GM12878 (cell line): ENCODE measurements at regions of chr3 and their contacts with region 1.

Region 1: GRCh38 chr3:46960081-46960701 is 16.4 kb downstream of the CCDC12 start:
- DNase-seq: no peak
- ATAC-seq: peak; percentile 65
- H3K4me3 ChIP-seq: no peak overlapping the region
- H3K27ac ChIP-seq: peak overlapping the region; percentile 38
- H3K4me1 ChIP-seq: peaks cover 55% of the 10 kb centered on the region
- H3K27me3 ChIP-seq: no peaks in the 10 kb centered on the region
- CTCF ChIP-seq: no peak
- EP300 ChIP-seq: no peak
- POLR2A ChIP-seq: no peak
- RAD21 ChIP-seq: no peak

Region 2: DNA sequence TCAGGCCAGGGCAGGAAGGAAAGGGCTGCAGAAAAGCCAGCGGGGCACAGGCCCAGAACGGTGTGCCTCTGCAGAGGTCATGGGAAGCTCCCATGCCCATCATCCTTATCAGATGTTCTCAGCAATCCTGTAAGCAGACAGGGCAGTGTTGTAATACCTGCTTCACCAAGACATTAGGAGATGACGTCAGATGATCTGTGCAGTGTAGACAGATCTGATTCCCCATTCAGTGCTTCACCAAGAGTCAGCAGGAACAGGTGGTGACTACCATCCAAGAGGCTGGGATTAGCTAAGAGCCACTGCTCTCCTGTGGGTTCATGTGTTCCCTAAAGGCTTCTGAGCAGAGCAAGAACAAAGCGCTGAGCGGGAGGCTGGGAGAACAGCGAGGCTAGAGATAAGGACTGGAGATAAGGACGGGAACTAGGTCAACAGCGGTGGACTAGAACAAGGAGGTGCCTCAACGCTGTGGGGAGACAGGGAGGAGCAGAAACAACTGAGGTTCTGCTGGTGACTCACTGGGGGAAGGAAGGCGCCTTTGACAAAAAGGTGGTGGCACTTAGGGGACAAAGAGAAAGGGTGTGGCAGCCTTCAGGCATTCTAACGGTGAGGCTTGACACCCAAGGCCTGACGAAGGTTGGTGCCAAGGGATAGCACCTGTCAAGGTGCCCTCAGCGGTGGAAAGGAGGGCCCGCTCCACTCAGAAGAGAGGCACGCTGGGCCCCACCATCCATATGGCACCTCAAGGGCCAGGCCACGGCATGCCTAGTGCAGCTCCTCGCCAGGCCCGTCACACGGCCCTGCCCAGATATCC is 12.0 kb before region 1 on chr3:
- CTCF ChIA-PET with region 1: interaction called, 6 read pairs
- POLR2A ChIA-PET with region 1: interaction called, 21 read pairs
- RAD21 ChIA-PET with region 1: interaction called, 11 read pairs
- SMC1A ChIA-PET with region 1: interaction called, 16 read pairs
- in situ Hi-C with region 1: no loop called
- intact Hi-C with region 1: no loop called
- DNase-seq: no peak
- ATAC-seq: no peak
- H3K4me3 ChIP-seq: no peak overlapping the region
- H3K27ac ChIP-seq: peak overlapping the region; percentile 73
- H3K4me1 ChIP-seq: peaks cover 45% of the 10 kb centered on the region
- H3K27me3 ChIP-seq: no peaks in the 10 kb centered on the region
- CTCF ChIP-seq: no peak
- EP300 ChIP-seq: no peak
- POLR2A ChIP-seq: no peak
- RAD21 ChIP-seq: no peak

Region 3: DNA sequence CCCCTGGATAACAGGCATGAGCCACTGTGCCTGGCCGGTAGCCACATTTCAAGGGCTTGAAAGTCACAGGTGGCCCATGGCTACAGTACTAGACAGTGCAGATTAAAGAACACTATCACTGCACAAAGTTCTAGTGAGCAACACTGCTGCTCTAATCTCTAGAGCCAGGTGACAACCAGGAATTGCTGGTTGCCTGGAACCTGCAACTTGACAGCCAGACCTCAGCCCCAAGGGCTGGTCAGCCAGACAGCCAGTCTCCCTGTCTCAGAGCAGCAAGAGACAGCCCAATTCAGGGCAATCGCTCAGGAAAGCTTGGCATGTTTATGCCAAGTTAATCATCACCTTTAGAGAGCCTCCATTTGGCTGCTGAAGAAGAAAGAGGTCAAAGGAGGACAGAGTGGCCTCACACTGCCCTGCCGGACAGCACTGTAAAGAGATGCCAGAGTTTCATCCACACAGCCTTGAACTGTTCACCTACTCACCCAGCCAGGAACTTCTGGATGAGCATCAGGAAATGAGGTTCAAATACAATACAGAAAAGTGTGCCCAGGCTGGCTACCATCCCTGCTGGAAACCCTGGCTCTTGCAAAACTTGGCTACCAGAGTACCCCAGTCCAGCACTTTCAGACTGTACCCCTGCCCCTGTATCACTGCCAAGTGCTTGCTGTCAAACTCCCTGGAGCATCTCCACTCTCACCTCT is 10.3 kb after region 1 on chr3:
- CTCF ChIA-PET with region 1: interaction called, 31 read pairs
- POLR2A ChIA-PET with region 1: interaction called, 25 read pairs
- RAD21 ChIA-PET with region 1: interaction called, 14 read pairs
- SMC1A ChIA-PET with region 1: interaction called, 27 read pairs
- in situ Hi-C with region 1: no loop called
- intact Hi-C with region 1: no loop called
- DNase-seq: no peak
- ATAC-seq: no peak
- H3K4me3 ChIP-seq: no peak overlapping the region; the same call in 1 of the 2 replicates
- H3K27ac ChIP-seq: peak overlapping the region; percentile 41
- H3K4me1 ChIP-seq: peaks cover 46% of the 10 kb centered on the region
- H3K27me3 ChIP-seq: no peaks in the 10 kb centered on the region
- CTCF ChIP-seq: no peak
- EP300 ChIP-seq: no peak
- POLR2A ChIP-seq: no peak
- RAD21 ChIP-seq: no peak

Region 4: DNA sequence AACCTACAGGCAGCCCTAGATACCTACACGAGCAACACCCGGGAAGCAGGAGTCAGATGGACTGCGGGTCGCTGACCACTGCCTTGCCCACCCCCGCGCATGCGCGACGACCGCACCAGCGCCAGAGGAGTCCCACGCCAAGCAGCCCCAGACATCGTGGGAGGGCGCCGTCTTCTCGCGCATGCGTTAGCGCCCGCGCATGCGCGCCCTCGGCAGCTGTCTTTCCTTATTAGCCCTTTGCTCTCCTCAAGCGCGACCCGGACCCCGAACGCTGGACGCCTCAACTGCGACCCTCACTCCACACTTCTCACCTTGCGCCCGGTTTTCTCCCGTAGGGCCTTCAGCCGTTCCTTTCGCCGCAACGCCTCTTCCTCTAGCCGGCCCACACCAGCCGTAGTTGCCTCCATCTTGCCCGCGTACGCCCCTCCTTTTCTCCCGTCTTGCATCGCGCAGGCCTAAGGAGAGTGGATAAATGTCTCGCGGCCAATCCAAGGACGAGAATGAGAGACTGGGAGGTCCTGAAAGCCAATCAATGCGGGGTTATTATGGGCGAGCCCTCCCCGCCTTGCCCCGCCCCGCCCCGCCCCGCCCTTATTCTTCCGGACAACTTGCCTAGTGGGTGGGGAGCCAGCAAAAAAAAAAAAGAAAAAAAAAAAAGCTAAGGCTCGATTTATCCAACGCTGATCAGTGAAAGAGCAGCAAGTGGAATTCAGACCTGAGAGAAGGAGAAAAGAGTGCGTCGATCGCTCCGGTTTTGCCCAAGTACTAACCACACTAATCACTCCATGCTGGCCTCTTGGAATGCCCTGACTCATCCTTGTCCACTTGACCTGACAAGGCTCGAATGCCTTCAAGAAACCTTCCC is 16.4 kb after region 1 on chr3 and contains the start of gene CCDC12:
- CTCF ChIA-PET with region 1: interaction called, 8 read pairs
- POLR2A ChIA-PET with region 1: interaction called, 25 read pairs
- RAD21 ChIA-PET with region 1: interaction called, 18 read pairs
- SMC1A ChIA-PET with region 1: interaction called, 27 read pairs
- in situ Hi-C with region 1: no loop called
- intact Hi-C with region 1: no loop called
- DNase-seq: peak; percentile 94
- ATAC-seq: peak; percentile 82
- H3K4me3 ChIP-seq: peak within 1 kb of the TSS; percentile 95
- H3K27ac ChIP-seq: peak within 1 kb of the TSS; percentile 91
- H3K4me1 ChIP-seq: peaks cover 32% of the 10 kb centered on the region
- H3K27me3 ChIP-seq: no peaks in the 10 kb centered on the region
- CTCF ChIP-seq: no peak
- EP300 ChIP-seq: no peak
- POLR2A ChIP-seq: peak; percentile 94
- RAD21 ChIP-seq: no peak
- polyA plus RNA-seq, gene CCDC12: 9.2 to 22.5 TPM